Activated B cell treated with CpG ODN at 0.5 μM for 24 hours (primary cell): ENCODE measurements at regions of chr15 and their contacts with region 1.

Region 1: DNA sequence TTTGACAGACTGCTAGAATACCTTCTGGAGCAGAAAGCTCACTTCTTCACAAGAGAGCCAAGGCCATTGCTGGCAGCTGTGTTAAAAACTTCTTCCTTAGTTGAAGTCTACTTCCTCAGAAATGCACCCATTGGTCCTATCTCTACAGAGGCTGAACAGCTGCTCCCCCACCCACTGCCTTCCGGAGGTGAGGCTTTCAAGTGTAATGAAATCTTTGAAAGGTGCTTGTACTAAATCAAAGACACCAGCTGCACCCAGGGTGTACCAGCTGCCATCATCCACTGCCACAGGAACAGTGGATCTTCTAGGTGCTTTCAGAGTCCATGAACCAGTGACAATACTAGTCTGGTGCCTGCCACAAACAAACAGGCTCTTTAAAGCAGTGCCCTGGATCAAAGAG is 26.4 kb upstream of the HERC1 start:
- DNase-seq: no peak
- ATAC-seq: peak; percentile 93
- H3K4me3 Mint-ChIP-seq: peak overlapping the region; percentile 19
- H3K27ac Mint-ChIP-seq: peak overlapping the region; percentile 91
- H3K4me1 Mint-ChIP-seq: peaks cover 29% of the 10 kb centered on the region
- H3K27me3 Mint-ChIP-seq: no peaks in the 10 kb centered on the region
- CTCF ChIP-seq: no peak

Region 2: GRCh38 chr15:63833021-63833696 is 27.0 kb before region 1 on chr15:
- CTCF ChIA-PET with region 1: interaction called, 3 read pairs
- POLR2A ChIA-PET with region 1: interaction called, 10 read pairs
- intact Hi-C with region 1: loop called (anchors 2 kb)
- DNase-seq: peak; percentile 44
- ATAC-seq: peak; percentile 43
- H3K4me3 Mint-ChIP-seq: peak overlapping the region; percentile 97
- H3K27ac Mint-ChIP-seq: peak overlapping the region; percentile 74
- H3K4me1 Mint-ChIP-seq: peaks cover 48% of the 10 kb centered on the region
- H3K27me3 Mint-ChIP-seq: no peaks in the 10 kb centered on the region
- CTCF ChIP-seq: no peak

Region 3: DNA sequence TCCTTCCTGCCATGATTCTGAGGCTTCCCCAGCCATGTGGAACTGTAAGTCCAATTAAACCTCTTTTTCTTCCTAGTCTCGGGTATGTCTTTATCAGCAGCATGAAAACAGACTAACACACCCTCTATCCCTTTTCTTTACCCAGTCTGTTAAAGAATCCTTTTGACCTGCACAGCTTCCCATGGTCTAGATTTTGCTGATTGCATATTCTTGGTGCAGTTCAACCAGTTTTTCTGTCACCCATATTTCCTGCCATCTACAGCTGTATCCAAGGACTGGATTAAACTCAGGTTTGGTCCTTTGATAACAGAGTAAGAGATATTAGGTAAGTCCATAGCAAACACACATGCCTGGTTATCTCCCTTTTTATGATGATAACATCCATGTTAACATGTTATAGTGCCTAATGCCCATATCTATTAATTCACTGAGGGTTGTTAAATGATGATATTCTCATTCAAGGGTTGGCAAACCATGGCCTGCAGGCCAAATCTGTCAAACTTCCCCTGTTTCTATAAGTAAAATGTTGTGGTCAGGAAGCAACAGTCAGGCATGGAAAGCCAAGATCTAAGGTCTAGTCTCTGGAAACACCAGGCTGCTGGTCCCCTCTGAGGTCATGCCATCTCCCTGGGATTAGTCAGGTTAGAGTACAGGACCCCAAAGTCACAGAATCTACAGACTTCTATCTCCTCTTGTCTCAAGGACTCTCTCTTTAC is 11.5 kb before region 1 on chr15:
- CTCF ChIA-PET with region 1: no interaction called
- POLR2A ChIA-PET with region 1: interaction called, 17 read pairs
- intact Hi-C with region 1: loop called (anchors 2 kb)
- DNase-seq: no peak
- ATAC-seq: peak; percentile 18
- H3K4me3 Mint-ChIP-seq: no peak overlapping the region
- H3K27ac Mint-ChIP-seq: no peak overlapping the region
- H3K4me1 Mint-ChIP-seq: peaks cover 21% of the 10 kb centered on the region
- H3K27me3 Mint-ChIP-seq: no peaks in the 10 kb centered on the region
- CTCF ChIP-seq: no peak

Region 4: DNA sequence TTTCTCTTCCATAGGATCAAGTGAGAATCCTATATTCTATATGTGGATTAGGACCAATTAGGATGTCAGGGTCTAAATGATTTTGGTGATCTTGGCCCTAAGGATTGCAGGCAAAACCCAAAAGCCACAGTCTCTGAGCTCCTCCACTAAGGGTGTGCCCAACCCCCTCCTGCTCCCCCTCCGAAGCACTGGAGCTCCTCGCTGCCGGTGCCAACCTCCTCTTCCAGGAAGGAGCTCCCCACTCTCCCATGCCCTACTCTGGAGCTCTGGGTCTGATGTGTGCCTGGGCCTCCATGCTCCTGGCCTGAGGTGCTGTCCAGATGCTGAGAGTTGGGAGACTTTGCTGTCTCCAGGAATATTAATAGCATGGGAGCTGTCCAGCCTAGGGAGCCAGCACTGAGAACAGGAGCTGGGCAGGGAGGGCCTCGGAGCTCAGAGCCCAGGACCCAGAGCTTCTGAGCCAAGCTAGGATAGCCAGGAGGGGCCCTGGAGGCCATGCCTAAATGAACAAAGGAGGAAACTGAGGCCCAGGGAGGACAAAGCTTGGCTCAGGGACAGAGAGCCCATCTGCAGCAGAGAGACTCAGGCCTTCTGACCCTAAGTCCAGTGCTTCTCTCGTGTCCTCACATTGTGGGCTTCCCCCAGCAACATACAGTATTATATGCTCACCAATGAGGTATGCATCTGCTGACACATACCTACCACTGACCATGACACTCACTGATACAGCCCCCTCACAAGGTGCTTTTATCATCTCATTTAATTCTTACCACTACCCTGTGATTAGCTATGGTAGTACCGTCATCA is 10.5 kb after region 1 on chr15:
- CTCF ChIA-PET with region 1: interaction called, 3 read pairs
- POLR2A ChIA-PET with region 1: interaction called, 11 read pairs
- intact Hi-C with region 1: loop called (anchors 1 kb)
- DNase-seq: no peak
- ATAC-seq: no peak
- H3K4me3 Mint-ChIP-seq: no peak overlapping the region
- H3K27ac Mint-ChIP-seq: peak overlapping the region; percentile 84
- H3K4me1 Mint-ChIP-seq: peaks cover 27% of the 10 kb centered on the region
- H3K27me3 Mint-ChIP-seq: no peaks in the 10 kb centered on the region
- CTCF ChIP-seq: no peak

Region 5: DNA sequence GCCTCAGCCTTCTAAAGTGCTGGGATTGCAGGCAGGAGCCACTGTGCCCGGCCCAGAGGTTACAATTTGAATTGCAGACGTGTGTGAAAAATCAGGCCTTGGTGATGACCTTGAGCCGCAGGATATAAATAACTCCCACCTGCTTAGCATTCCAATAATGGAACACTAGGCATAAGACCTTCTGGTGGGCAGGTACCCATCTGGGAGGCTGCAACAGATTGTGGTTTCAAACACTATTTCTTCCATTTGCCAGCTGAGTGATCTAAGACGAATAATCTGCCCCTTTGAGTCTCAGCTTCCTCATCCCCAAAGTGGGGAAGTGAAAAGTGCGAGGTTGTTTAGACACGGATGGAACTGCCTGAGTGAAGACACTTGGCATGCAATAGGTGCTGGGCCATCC is 21.3 kb after region 1 on chr15:
- CTCF ChIA-PET with region 1: no interaction called
- POLR2A ChIA-PET with region 1: interaction called, 18 read pairs
- intact Hi-C with region 1: no loop called
- DNase-seq: no peak
- ATAC-seq: peak; percentile 84
- H3K4me3 Mint-ChIP-seq: peak overlapping the region; percentile 61
- H3K27ac Mint-ChIP-seq: peak overlapping the region; percentile 86
- H3K4me1 Mint-ChIP-seq: peaks cover 68% of the 10 kb centered on the region
- H3K27me3 Mint-ChIP-seq: no peaks in the 10 kb centered on the region
- CTCF ChIP-seq: no peak